Activated naive CD8-positive, alpha-beta T cell treated with anti-CD3 and anti-CD28 coated beads, Interleukin-2, amount 10 ng/mL, durations not matched to agents 7 days and 5 days (primary cell): ENCODE measurements at regions of chr12 and their contacts with region 1.

Region 1: GRCh38 chr12:49644620-49644994 is 21.2 kb downstream of the PRPF40B start:
- DNase-seq: peak; percentile 83
- ATAC-seq: peak; percentile 92
- H3K4me3 Mint-ChIP-seq: peak overlapping the region; percentile 26
- H3K27ac Mint-ChIP-seq: peak overlapping the region; percentile 87
- H3K4me1 Mint-ChIP-seq: peaks cover 26% of the 10 kb centered on the region
- H3K27me3 Mint-ChIP-seq: no peaks in the 10 kb centered on the region

Region 2: DNA sequence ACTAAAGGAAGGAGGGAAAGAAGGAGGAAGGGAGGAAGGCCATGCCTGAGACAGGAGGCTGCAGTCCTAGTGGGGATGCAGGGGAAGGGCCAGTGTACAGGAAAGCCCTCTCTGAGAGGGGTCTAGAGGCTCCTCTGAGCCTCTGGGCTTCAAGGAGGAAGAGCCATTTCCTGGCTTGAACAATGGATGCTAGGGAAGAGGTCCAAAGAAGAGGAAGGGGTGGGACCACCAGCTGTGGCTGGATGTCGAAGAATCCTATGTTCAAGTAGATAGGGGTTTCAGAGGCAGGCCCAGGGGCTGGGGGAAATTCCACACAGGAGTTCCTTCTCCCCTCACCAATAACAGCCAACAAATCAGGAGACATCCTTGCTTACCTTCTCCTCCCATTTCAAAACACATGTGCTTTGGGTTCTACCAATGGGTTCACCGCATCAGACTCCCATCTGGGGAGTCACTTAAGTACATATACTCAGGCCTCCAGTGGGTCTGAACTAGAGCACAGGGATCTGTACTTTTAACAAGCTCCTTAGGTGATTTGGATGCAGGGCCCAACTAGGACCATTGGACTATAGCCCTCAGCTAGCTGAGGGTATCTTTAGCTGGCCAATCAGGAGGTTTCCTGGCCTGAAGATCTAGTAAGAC is 11.1 kb after region 1 on chr12:
- POLR2A ChIA-PET with region 1: interaction called, 10 read pairs
- DNase-seq: no peak
- ATAC-seq: no peak
- H3K4me3 Mint-ChIP-seq: no peak overlapping the region
- H3K27ac Mint-ChIP-seq: peak overlapping the region; percentile 72
- H3K4me1 Mint-ChIP-seq: peaks cover 20% of the 10 kb centered on the region
- H3K27me3 Mint-ChIP-seq: no peaks in the 10 kb centered on the region

Region 3: GRCh38 chr12:49662998-49663843 is 18.6 kb after region 1 on chr12:
- POLR2A ChIA-PET with region 1: interaction called, 14 read pairs
- DNase-seq: peak; percentile 65
- ATAC-seq: peak; percentile 98
- H3K4me3 Mint-ChIP-seq: peak overlapping the region; percentile 82
- H3K27ac Mint-ChIP-seq: peak overlapping the region; percentile 92
- H3K4me1 Mint-ChIP-seq: peaks cover 52% of the 10 kb centered on the region
- H3K27me3 Mint-ChIP-seq: no peaks in the 10 kb centered on the region

Region 4: GRCh38 chr12:49707128-49707811 is 62.7 kb after region 1 on chr12 and contains the start of gene FMNL3:
- POLR2A ChIA-PET with region 1: interaction called, 19 read pairs
- DNase-seq: peak; percentile 100
- ATAC-seq: peak; percentile 97
- H3K4me3 Mint-ChIP-seq: peak within 1 kb of the TSS; percentile 97
- H3K27ac Mint-ChIP-seq: peak within 1 kb of the TSS; percentile 91
- H3K4me1 Mint-ChIP-seq: peaks cover 39% of the 10 kb centered on the region
- H3K27me3 Mint-ChIP-seq: peaks cover 20% of the 10 kb centered on the region
- total RNA-seq, gene FMNL3: 43.5 to 43.8 TPM

Region 5: GRCh38 chr12:49930515-49931288 is 286.1 kb after region 1 on chr12:
- POLR2A ChIA-PET with region 1: no interaction called
- DNase-seq: no peak
- ATAC-seq: no peak
- H3K4me3 Mint-ChIP-seq: no peak overlapping the region
- H3K27ac Mint-ChIP-seq: no peak overlapping the region
- H3K4me1 Mint-ChIP-seq: no peaks in the 10 kb centered on the region
- H3K27me3 Mint-ChIP-seq: peaks cover 7% of the 10 kb centered on the region